GM23248 (cell line): ENCODE measurements at regions of chr17 and their contacts with region 1.

Region 1: DNA sequence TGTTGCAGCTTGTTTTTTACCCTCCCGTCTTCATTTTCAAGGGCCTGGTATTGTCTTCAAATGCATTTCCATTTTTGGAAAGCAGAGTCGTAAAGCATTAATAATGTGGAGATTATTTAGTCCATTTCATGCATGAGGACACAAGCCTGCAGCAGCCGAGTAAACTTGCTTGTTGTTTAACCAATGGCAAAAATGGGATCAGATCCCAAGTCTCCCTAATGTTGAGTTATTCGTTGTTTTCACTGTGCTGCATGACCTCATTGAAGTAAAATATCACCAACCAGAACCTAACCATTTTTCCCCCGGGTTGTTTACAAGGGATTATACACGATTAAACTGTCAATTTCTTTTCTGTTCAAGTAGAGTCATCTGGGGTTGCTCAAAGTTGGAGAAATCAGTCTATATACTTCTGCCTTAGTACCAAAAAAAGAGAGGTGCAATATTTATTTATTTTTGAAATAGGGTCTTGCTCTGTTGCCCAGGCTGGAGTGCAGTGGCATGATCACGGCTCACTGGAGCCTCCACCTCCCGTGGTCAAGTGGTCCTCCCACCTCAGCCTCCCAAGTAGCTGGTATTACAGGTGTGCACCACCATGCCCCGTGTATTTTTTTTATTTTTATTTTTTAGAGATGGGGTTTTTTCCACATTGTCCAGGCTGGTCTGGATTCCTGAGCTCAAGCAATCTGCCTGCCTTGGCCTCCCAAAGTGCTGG is 12.4 kb downstream of the AMZ2 start:
- DNase-seq: no peak
- H3K4me3 ChIP-seq: no peak overlapping the region
- H3K27ac ChIP-seq: no peak overlapping the region
- H3K4me1 ChIP-seq: no peaks in the 10 kb centered on the region; the same call in 1 of the 2 replicates
- H3K27me3 ChIP-seq: no peaks in the 10 kb centered on the region

Region 2: DNA sequence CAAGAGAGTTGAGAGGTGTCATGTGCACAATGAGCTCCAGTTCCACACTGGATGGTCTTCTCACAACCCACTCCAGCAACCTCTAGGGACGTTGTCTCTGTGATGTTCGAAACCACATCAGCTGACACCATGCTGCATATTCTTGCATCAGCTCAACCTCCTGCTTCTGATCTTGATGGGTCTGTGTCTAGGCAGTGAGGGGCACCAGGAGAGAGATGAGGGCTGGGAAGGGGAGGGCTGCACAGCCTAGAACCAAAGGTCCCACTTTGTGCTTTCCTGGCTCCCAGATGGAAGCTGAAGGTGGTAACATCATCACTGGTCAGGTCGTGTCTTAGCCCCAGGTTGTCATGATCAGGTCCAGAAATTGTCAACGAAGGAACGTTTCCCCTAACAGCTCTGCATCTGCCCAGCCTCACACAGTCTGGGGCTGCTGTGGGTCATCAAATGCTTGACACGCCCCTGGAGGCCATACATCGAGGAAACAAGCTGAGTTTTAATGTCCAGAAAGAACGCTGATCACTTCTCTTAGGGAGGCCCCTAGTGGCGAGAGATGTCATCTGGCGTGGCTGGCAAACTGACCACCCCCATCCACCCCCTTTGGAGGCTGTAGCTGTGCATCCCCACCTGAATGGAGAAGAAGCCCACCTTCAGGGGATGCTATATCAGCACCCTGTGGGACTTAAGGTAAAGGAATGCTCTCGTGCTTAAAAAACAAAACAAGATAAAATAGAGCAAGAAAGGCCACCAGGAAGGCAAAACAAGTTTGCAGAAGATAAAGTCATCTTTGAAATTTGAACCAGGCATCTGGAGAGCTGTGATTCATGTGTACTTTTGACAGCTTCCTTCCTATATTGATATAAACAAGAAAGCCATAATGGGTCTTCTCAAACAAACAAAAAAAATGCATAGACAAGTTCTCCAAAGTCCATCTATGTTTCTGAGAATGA is 138.8 kb after region 1 on chr17:
- in situ Hi-C with region 1: loop called (anchors 10 kb)
- DNase-seq: peak; percentile 89
- H3K4me3 ChIP-seq: peak overlapping the region; percentile 47
- H3K27ac ChIP-seq: peak overlapping the region; percentile 61
- H3K4me1 ChIP-seq: peaks cover 22% of the 10 kb centered on the region
- H3K27me3 ChIP-seq: no peaks in the 10 kb centered on the region

Region 3: GRCh38 chr17:68424942-68425386 is 164.8 kb after region 1 on chr17:
- in situ Hi-C with region 1: loop called (anchors 10 kb)
- DNase-seq: no peak
- H3K4me3 ChIP-seq: no peak overlapping the region
- H3K27ac ChIP-seq: no peak overlapping the region
- H3K4me1 ChIP-seq: no peaks in the 10 kb centered on the region
- H3K27me3 ChIP-seq: no peaks in the 10 kb centered on the region